Activated CD4-positive, alpha-beta T cell treated with anti-CD3 and anti-CD28 coated beads, Interleukin-2, amount 10 ng/mL, durations not matched to agents 24 days and 14 days (primary cell): ENCODE measurements at regions of chr1 and their contacts with region 1.

Region 1: DNA sequence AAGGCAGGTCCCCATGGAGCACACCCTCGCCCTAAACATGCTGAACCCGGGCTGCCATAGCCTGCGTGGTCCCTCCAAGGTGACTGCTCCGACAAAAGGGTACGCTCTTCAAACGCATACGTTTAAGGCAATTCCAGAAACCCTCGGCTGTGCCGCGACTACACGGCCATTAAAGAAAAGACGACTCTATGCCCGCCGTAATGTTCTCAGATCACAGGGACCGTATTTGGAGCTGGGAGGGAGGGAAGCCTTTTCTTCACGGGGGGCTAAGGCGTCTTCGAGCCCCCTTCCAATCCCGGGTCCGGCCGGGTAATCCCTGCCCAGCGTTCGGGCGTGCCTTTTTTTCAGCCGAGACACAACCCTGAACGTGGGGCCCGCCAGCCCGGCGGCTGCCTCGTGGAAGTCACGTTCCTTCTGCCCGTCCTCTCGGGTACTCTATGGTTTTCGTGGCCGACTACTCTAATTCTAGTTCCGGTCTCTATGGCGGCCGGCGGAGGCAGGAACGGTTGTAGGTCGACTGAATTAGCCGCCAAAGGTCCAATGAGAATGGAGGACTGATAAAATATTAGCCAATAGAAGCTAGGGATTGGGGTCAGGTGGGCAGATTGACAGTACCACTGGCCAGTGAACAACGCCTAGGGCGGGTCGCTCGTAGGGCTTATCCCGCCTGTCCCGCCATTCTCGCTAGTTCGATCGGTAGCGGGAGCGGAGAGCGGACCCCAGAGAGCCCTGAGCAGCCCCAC is at the start of gene YBX1:
- DNase-seq: peak; percentile 98
- H3K4me3 Mint-ChIP-seq: peak within 1 kb of the TSS; percentile 94
- H3K27ac Mint-ChIP-seq: peak within 1 kb of the TSS; percentile 98
- H3K4me1 Mint-ChIP-seq: peaks cover 50% of the 10 kb centered on the region
- H3K27me3 Mint-ChIP-seq: no peaks in the 10 kb centered on the region
- total RNA-seq, gene YBX1: 861 and 867 TPM in 2 replicates

Region 2: GRCh38 chr1:42462828-42463763 is 218.8 kb before region 1 on chr1 and contains the start of gene CCDC30:
- intact Hi-C with region 1: loop called (anchors 1 kb)
- DNase-seq: peak; percentile 99
- H3K4me3 Mint-ChIP-seq: peak within 1 kb of the TSS; percentile 85
- H3K27ac Mint-ChIP-seq: peak within 1 kb of the TSS; percentile 78
- H3K4me1 Mint-ChIP-seq: peaks cover 19% of the 10 kb centered on the region
- H3K27me3 Mint-ChIP-seq: peaks cover 10% of the 10 kb centered on the region
- total RNA-seq, gene CCDC30: 0.68 and 1.1 TPM in 2 replicates

Region 3: GRCh38 chr1:42567043-42567442 is 114.9 kb before region 1 on chr1:
- intact Hi-C with region 1: no loop called
- DNase-seq: no peak
- H3K4me3 Mint-ChIP-seq: no peak overlapping the region
- H3K27ac Mint-ChIP-seq: no peak overlapping the region
- H3K4me1 Mint-ChIP-seq: no peaks in the 10 kb centered on the region
- H3K27me3 Mint-ChIP-seq: peaks cover 13% of the 10 kb centered on the region

Region 4: DNA sequence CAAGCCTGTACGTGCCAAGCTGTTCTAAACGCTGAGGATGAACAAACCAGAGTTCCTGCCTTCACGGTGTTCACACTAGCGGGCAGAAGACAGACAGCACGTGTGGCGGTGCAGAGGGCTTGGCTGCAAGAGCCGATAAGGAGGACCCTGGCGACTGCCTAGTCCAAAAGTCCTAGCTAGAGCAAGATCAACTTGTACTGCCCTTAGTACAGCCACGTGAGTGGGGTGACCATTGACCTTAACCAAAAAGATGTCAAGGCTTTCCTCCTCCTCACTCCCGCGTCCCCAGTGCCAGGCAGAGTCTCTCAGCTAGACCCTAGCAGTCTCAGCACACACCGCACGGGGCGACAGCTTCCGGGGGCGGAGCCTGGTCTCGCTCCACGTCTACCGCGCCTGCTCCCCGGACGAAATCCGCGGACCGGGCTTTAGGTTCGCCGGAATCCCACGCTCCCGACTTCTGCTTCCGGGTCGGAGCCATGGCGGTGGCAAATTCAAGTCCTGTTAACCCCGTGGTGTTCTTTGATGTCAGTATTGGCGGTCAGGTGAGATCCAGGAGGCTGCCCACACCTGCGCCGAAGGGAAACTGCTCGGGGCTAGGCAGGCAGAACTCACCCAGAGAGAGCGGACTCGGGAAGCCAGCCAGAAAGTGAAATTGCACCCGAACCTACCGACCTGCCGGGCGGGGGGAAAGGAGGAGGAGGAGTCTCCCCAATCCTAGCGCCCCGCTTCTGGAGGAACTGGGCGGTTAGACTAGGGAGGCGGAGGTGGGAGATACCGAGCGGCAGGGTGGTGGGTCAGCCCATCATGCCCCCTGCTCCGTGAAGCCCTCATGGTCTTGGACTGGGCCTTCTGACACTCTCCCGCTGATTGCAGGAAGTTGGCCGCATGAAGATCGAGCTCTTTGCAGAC is 23.7 kb before region 1 on chr1 and contains the start of gene PPIH:
- intact Hi-C with region 1: loop called (anchors 1 kb)
- DNase-seq: peak; percentile 99
- H3K4me3 Mint-ChIP-seq: peak within 1 kb of the TSS; percentile 97
- H3K27ac Mint-ChIP-seq: peak within 1 kb of the TSS; percentile 98
- H3K4me1 Mint-ChIP-seq: peaks cover 34% of the 10 kb centered on the region
- H3K27me3 Mint-ChIP-seq: peaks cover 4% of the 10 kb centered on the region
- total RNA-seq, gene PPIH: 88.4 and 92.9 TPM in 2 replicates